Activated CD8-positive, alpha-beta T cell treated with anti-CD3 and anti-CD28 coated beads, Interleukin-2, amount 10 ng/mL, durations not matched to agents 7 days and 5 days (primary cell): ENCODE measurements at regions of chr2 and their contacts with region 1.

Region 1: GRCh38 chr2:191150600-191151330 is at the start of gene STAT4:
- DNase-seq: peak; percentile 91
- ATAC-seq: peak; percentile 86
- H3K4me3 Mint-ChIP-seq: peak within 1 kb of the TSS; percentile 92
- H3K27ac Mint-ChIP-seq: peak within 1 kb of the TSS; percentile 97
- H3K4me1 Mint-ChIP-seq: peaks cover 72% of the 10 kb centered on the region
- H3K27me3 Mint-ChIP-seq: no peaks in the 10 kb centered on the region
- total RNA-seq, gene STAT4: 154 to 157 TPM

Region 2: DNA sequence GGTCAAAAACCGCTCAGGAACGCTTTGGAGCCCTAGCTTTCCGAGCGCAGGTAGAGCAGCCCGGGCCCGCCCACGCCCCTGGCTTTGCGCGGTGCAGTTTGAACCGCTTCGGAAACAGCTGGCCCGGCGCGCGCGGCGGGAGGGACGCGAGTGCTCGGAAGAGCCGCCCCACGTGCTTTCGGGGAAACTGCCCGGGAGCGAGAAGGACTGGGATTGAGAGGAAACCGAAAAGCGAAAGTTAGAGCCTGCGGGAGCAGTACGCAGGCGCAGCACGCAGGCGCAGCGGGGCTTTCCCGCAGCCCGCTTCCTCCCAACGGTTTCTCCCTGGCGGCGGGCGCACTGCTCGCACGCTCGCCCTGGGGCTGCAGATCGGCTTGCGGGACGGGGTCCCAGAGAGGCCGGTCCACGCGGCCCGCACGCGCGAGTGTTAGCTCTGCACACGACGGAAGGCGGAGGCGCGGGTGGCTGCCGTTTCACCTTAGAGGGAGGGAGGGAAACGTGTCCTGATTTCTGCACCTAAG is 130.5 kb before region 1 on chr2:
- CTCF ChIA-PET with region 1: interaction called, 13 read pairs
- POLR2A ChIA-PET with region 1: interaction called, 78 read pairs
- DNase-seq: peak; percentile 94
- ATAC-seq: peak; percentile 75
- H3K4me3 Mint-ChIP-seq: no peak overlapping the region
- H3K27ac Mint-ChIP-seq: no peak overlapping the region
- H3K4me1 Mint-ChIP-seq: peaks cover 38% of the 10 kb centered on the region
- H3K27me3 Mint-ChIP-seq: no peaks in the 10 kb centered on the region

Region 3: GRCh38 chr2:191051825-191052778 is 98.7 kb before region 1 on chr2:
- CTCF ChIA-PET with region 1: interaction called, 1,116 read pairs
- POLR2A ChIA-PET with region 1: interaction called, 27 read pairs
- DNase-seq: peak; percentile 43
- ATAC-seq: peak; percentile 46
- H3K4me3 Mint-ChIP-seq: no peak overlapping the region
- H3K27ac Mint-ChIP-seq: no peak overlapping the region
- H3K4me1 Mint-ChIP-seq: peaks cover 23% of the 10 kb centered on the region
- H3K27me3 Mint-ChIP-seq: no peaks in the 10 kb centered on the region

Region 4: DNA sequence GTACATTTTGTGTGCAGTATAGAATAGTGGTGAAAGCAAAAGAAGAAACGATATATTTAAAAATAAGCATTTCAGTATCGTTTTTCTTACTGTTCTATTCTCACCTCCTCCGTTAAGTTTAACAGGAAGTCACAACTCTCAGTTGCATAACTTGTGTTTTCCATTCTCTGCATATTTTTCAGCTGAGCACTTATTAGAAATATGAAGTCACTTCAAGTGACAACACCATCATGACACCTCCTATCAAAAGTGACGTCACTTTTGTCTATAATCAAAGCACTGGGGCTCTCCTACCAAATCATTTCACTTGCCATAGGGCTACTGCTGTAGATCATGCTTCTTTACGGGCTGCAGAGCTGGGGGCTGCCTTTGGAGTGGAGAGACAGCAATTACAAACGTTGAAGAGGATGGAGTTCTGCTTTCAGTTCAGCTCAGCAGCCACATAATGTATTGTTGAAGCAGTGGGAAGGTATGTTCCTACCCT is 36.3 kb before region 1 on chr2:
- CTCF ChIA-PET with region 1: interaction called, 24 read pairs
- POLR2A ChIA-PET with region 1: interaction called, 41 read pairs
- DNase-seq: peak; percentile 48
- ATAC-seq: peak; percentile 46
- H3K4me3 Mint-ChIP-seq: peak overlapping the region; percentile 53
- H3K27ac Mint-ChIP-seq: peak overlapping the region; percentile 92
- H3K4me1 Mint-ChIP-seq: peaks cover 76% of the 10 kb centered on the region
- H3K27me3 Mint-ChIP-seq: no peaks in the 10 kb centered on the region

Region 5: GRCh38 chr2:191171708-191172355 is 21.1 kb after region 1 on chr2:
- CTCF ChIA-PET with region 1: interaction called, 12 read pairs
- POLR2A ChIA-PET with region 1: no interaction called
- DNase-seq: no peak
- ATAC-seq: no peak
- H3K4me3 Mint-ChIP-seq: no peak overlapping the region
- H3K27ac Mint-ChIP-seq: no peak overlapping the region
- H3K4me1 Mint-ChIP-seq: peaks cover 59% of the 10 kb centered on the region
- H3K27me3 Mint-ChIP-seq: no peaks in the 10 kb centered on the region

Region 6: DNA sequence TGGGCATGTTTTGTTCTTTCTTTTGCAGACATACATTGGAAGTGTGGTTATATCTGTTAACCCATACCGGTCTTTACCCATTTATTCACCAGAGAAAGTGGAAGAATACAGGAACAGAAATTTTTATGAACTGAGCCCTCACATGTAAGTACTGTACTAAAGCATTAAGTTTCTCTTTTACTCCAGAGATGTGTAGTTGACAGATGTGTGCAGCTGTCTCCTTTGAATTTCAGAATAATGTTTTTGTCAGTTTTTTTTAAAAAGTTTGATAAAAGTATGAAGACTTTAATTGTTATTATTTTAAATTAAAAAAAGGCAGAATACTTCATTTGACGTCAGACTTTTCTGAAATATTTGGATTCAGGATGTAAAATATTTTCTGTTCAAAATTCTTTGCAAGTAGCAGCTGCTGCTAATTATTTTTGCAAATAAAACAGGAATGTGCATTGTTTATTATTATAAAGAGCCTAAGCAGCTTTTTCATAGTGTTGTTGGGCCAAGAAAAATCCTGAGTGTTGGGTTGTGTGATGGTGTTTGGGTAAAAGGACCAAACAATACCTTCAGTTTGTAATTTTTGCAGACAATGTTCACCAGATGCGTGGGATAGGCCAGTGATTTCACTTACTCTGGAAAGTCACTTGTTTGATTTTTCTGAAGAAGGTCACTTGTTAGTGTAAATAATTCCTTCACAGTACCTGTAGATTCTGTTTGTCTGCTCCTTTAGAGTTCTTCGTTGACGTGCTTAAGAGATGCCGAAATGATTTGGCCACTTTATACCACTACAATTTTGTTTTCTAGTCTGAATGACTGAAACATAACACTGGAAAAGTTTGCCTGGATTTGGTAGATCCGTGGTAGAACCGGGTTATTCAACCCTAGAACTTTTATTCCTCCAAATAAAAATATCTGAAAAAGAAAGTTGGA is 145.6 kb after region 1 on chr2:
- CTCF ChIA-PET with region 1: no interaction called
- POLR2A ChIA-PET with region 1: no interaction called
- DNase-seq: no peak
- ATAC-seq: no peak
- H3K4me3 Mint-ChIP-seq: no peak overlapping the region
- H3K27ac Mint-ChIP-seq: no peak overlapping the region
- H3K4me1 Mint-ChIP-seq: peaks cover 5% of the 10 kb centered on the region
- H3K27me3 Mint-ChIP-seq: no peaks in the 10 kb centered on the region